Activated T-helper 2 cell treated with anti-CD3 and anti-CD28 coated beads, Interferon-gamma antibody, Interleukin-2, Interleukin-4, amounts not matched to agents 10 μg/mL and 5 μg/mL and 100 μg/mL, durations not matched to agents 14 hours and 24 hours and 36 hours (primary cell): ENCODE measurements at regions of chr7 and their contacts with region 1.

Region 1: GRCh38 chr7:149624419-149625339 is 127.1 kb upstream of the ZNF746 start:
- DNase-seq: peak; percentile 92
- H3K4me3 Mint-ChIP-seq: peak overlapping the region; percentile 87
- H3K27ac Mint-ChIP-seq: peak overlapping the region; percentile 87
- H3K4me1 Mint-ChIP-seq: peaks cover 38% of the 10 kb centered on the region
- H3K27me3 Mint-ChIP-seq: peaks cover 7% of the 10 kb centered on the region

Region 2: DNA sequence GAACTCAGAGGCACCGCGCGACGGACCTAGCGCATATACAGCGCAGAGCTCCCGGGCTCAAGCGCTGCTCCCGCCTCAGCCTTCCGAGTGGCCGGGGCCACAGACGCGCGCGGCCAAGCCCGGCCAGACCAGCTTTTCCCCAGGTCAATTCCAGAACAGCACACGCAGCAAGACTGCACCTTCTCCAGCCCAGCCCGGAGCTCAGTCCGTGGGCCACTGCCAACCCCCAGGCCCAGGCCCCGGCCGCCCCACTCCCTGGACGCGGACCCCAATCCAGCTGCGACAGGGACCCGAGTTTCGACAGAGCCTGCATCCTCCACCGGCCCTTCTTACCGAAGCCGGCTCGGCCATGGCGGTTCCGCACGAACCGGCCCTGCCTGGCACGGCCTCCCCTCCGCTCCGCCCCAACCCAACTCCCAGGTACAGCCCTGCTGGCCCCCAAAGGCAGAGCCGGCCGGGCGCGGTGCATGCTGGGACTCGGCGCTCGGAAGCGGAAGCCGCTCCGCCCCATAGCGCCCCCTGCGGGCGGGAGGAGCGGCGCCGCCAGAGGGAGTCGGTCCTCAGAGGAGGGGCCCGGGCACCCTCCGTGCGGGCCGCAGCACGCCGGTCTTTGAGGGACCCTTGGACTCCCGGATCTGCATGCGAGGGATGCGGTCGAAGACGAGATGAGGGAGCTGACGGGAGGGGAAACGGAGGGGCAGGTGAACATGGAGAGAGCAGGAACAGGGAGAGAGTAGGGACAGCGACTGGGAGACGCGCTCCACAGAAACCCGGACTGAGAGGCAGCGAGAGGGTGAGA is 498.6 kb before region 1 on chr7 and contains the start of gene ZNF425:
- intact Hi-C with region 1: loop called (anchors 5 kb)
- DNase-seq: peak; percentile 91
- H3K4me3 Mint-ChIP-seq: peak within 1 kb of the TSS; percentile 100
- H3K27ac Mint-ChIP-seq: peak within 1 kb of the TSS; percentile 100
- H3K4me1 Mint-ChIP-seq: peaks cover 19% of the 10 kb centered on the region
- H3K27me3 Mint-ChIP-seq: no peaks in the 10 kb centered on the region
- total RNA-seq, gene ZNF425: 0.39 and 1.0 TPM in 2 replicates

Region 3: GRCh38 chr7:149209518-149210269 is 415.0 kb before region 1 on chr7:
- intact Hi-C with region 1: loop called (anchors 1 kb)
- DNase-seq: peak; percentile 70
- H3K4me3 Mint-ChIP-seq: peak overlapping the region; percentile 32
- H3K27ac Mint-ChIP-seq: peak overlapping the region; percentile 94
- H3K4me1 Mint-ChIP-seq: peaks cover 31% of the 10 kb centered on the region
- H3K27me3 Mint-ChIP-seq: no peaks in the 10 kb centered on the region

Region 4: GRCh38 chr7:149422129-149422913 is 202.4 kb before region 1 on chr7:
- intact Hi-C with region 1: loop called (anchors 1 kb)
- DNase-seq: peak; percentile 68
- H3K4me3 Mint-ChIP-seq: peak overlapping the region; percentile 71
- H3K27ac Mint-ChIP-seq: peak overlapping the region; percentile 55
- H3K4me1 Mint-ChIP-seq: peaks cover 3% of the 10 kb centered on the region
- H3K27me3 Mint-ChIP-seq: peaks cover 5% of the 10 kb centered on the region

Region 5: GRCh38 chr7:149497456-149498261 is 127.0 kb before region 1 on chr7 and contains the start of gene ZNF746:
- intact Hi-C with region 1: loop called (anchors 2 kb)
- DNase-seq: peak; percentile 78
- H3K4me3 Mint-ChIP-seq: peak within 1 kb of the TSS; percentile 96
- H3K27ac Mint-ChIP-seq: peak within 1 kb of the TSS; percentile 97
- H3K4me1 Mint-ChIP-seq: peaks cover 32% of the 10 kb centered on the region
- H3K27me3 Mint-ChIP-seq: no peaks in the 10 kb centered on the region
- total RNA-seq, gene ZNF746: 23.7 and 26.4 TPM in 2 replicates

Region 6: GRCh38 chr7:149838224-149838947 is 213.7 kb after region 1 on chr7 and contains the start of gene ZNF862:
- intact Hi-C with region 1: no loop called
- DNase-seq: peak; percentile 95
- H3K4me3 Mint-ChIP-seq: peak within 1 kb of the TSS; percentile 88
- H3K27ac Mint-ChIP-seq: peak within 1 kb of the TSS; percentile 56
- H3K4me1 Mint-ChIP-seq: peaks cover 21% of the 10 kb centered on the region
- H3K27me3 Mint-ChIP-seq: peaks cover 11% of the 10 kb centered on the region
- total RNA-seq, gene ZNF862: 14.6 and 16.4 TPM in 2 replicates

Region 7: DNA sequence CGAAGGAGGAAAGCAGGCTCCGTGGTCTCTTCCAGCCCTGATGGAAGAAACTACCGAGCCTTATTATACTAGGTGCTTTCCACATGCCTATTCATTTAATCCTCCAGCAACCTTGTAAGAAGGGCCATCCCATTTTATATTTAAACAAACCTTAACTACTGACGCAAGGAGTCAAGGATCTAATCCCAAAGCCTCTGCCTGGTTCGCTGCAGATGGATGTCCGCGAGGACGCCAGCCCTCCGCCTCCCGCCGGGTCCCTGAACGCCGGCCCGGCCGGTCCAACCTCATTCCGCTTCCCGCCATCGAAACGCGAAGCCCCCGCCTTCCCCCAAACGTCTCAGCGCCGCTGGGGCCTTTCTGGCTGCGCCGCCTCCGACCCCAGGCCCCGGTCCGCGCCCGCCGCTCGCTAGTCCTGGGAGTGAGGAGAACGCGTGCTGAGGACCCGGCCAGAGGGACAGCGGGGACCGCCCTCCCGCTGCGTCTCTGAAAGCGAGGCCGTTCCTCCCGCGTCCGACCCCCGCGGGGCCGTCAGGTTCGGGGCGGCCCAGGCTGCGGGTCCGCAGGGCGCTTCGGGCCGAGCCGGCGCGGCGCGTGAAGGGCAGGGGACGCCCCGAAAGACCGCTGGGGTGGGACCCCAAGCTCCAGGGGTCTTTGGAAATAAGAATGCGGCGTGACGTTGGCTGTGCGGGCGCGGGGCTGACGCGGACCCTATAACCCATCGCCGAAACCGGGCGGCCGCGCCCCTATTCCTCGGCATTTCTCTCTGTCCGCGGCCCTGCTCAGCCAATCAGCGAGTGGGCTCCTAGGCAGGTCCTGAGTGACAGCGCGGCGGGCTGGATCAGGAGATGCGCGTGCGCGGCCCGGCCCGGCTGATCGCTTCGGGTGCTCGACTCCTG is 248.6 kb after region 1 on chr7 and contains the start of gene ATP6V0E2:
- intact Hi-C with region 1: loop called (anchors 10 kb)
- DNase-seq: peak; percentile 91
- H3K4me3 Mint-ChIP-seq: peak within 1 kb of the TSS; percentile 89
- H3K27ac Mint-ChIP-seq: peak within 1 kb of the TSS; percentile 90
- H3K4me1 Mint-ChIP-seq: peaks cover 57% of the 10 kb centered on the region
- H3K27me3 Mint-ChIP-seq: no peaks in the 10 kb centered on the region
- total RNA-seq, gene ATP6V0E2: 50.2 and 54.3 TPM in 2 replicates